ENCODE measurements at regions of chr9 and their contacts with region 1.

Region 1: GRCh38 chr9:81671880-81672280 is 17.5 kb downstream of the TLE1 start:
- DNase-seq: no peak
- H3K4me3 ChIP-seq: no peak overlapping the region
- H3K4me1 ChIP-seq: no peaks in the 10 kb centered on the region
- H3K27me3 ChIP-seq: no peaks in the 10 kb centered on the region

Region 2: DNA sequence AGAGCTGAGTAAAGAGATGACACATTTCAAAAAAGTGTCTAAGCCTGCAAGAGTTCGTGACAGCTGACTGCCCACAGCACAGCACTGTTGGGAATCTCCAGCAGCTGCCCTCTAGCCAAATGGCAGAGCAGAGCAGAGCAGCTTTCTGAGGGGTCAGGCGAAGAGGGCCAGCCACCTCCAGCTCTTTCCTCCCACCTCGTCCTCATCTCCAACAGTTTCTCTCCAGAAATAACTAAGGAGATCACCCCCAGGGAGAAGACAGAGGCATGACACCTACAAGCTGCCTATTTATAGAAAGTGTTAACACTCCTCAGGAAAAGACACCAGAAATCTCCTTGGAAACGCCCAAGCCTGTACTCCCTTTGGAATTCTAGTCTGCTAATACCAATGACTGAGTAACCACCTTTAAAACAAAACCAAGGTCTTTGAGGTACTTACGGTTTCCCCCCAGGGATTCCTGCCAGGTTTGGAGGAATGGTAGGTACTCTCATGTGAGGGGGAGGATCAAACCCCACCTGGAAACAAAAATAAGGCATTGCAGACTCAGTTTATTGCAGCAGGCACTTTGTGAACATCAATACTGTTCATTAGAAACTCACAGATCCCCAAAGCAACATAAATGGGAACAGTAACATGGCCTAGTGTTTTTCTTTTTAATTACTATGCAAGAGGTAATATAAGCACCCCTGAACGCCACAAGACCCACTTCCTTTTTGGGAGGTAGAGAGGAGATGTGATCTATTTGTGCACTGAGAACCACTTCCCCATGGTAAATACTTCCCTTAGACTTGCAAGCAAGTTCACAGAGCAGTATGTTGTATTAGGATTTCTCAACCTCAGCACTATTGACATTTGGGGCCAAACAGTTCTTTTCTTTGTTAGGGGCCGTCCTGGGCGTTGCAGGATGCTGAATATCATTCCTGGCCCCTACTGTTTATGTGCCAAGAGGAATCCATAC is 61.8 kb before region 1 on chr9:
- in situ Hi-C with region 1: loop called (anchors 10 kb)
- DNase-seq: no peak
- H3K4me3 ChIP-seq: no peak overlapping the region
- H3K4me1 ChIP-seq: no peaks in the 10 kb centered on the region
- H3K27me3 ChIP-seq: no peaks in the 10 kb centered on the region